PC-3 (cell line): ENCODE measurements at regions of chr22 and their contacts with region 1.

Region 1: GRCh38 chr22:28429711-28430110 is 249.9 kb downstream of the TTC28 start:
- DNase-seq: no peak
- ATAC-seq: no peak
- H3K4me3 ChIP-seq: no peak overlapping the region
- H3K27ac ChIP-seq: no peak overlapping the region
- H3K4me1 ChIP-seq: peaks cover 10% of the 10 kb centered on the region
- H3K27me3 ChIP-seq: no peaks in the 10 kb centered on the region
- CTCF ChIP-seq: no peak

Region 2: DNA sequence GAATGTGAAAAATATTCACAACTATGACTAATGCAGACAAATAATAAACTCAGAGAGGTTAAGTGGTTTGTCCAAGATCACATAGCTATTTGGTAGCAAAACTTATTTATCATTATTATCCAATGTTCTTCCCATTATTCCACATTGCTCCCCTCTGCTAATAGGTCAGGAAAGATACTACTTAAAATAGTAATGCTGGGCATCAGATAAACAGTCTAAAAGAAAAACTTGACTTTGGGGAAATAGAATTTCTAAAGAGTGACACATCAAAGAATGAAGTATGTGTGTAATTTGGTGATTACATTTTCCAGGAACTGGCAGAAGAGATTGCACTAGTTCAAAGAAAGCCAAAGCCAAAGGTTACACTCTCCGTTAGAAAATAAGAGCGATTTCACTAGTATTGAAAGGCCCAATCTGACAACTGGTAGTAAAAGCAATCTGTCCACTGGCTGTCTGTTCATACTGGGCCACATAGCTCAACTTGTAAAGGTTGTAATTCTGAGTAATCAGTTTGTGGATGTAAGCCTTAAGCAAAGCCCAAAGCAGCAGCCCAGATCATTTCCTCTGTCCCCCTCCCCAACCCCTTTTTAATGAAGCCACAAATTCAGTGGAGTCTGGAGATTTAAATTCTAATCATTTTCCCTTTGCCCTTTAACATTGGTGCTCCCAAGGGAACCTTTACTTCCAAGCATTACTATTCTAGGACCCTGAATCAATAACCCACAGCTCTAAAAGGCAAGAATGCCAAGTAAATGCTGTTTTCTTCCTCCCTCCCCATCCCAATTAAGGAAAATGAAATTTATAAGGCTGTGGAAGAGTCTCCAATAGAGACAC is 33.6 kb before region 1 on chr22:
- CTCF ChIA-PET with region 1: no interaction called
- POLR2A ChIA-PET with region 1: no interaction called
- intact Hi-C with region 1: loop called (anchors 1 kb)
- DNase-seq: peak; percentile 4
- ATAC-seq: peak; percentile 61
- H3K4me3 ChIP-seq: no peak overlapping the region
- H3K27ac ChIP-seq: no peak overlapping the region
- H3K4me1 ChIP-seq: 0 out of 2 replicates have a peak, but pooled peaks cover 4% of the 10 kb centered on the region
- H3K27me3 ChIP-seq: no peaks in the 10 kb centered on the region
- CTCF ChIP-seq: no peak

Region 3: GRCh38 chr22:28442264-28442710 is 12.6 kb after region 1 on chr22:
- CTCF ChIA-PET with region 1: no interaction called
- POLR2A ChIA-PET with region 1: no interaction called
- intact Hi-C with region 1: no loop called
- DNase-seq: no peak
- ATAC-seq: no peak
- H3K4me3 ChIP-seq: no peak overlapping the region
- H3K27ac ChIP-seq: no peak overlapping the region
- H3K4me1 ChIP-seq: no peaks in the 10 kb centered on the region
- H3K27me3 ChIP-seq: no peaks in the 10 kb centered on the region
- CTCF ChIP-seq: no peak

Region 4: DNA sequence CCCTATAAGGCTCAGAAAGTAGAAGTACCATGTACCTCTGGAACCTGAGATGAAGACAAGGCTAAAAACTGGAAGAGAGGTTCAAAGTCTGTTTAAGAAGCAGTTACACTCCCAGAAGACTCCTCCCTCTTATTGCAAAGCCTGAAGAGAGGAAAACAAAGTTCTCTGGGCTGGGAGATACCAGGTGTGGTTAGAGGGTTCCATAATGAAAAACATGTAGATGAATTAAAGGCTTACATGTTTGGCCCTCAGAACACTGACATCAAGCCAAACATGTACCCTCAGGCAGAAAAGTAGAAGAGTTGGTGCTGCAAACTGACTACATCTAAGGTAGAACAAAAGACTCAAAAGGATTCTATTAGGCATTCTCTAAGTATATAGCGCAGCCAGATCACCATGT is 44.6 kb after region 1 on chr22:
- CTCF ChIA-PET with region 1: no interaction called
- POLR2A ChIA-PET with region 1: no interaction called
- intact Hi-C with region 1: no loop called
- DNase-seq: no peak
- ATAC-seq: no peak
- H3K4me3 ChIP-seq: no peak overlapping the region
- H3K27ac ChIP-seq: no peak overlapping the region
- H3K4me1 ChIP-seq: no peaks in the 10 kb centered on the region
- H3K27me3 ChIP-seq: no peaks in the 10 kb centered on the region
- CTCF ChIP-seq: no peak

Region 5: GRCh38 chr22:28484662-28485061 is 55.0 kb after region 1 on chr22:
- CTCF ChIA-PET with region 1: no interaction called
- POLR2A ChIA-PET with region 1: interaction called, 17 read pairs
- intact Hi-C with region 1: no loop called
- DNase-seq: no peak
- ATAC-seq: no peak
- H3K4me3 ChIP-seq: no peak overlapping the region
- H3K27ac ChIP-seq: no peak overlapping the region
- H3K4me1 ChIP-seq: no peaks in the 10 kb centered on the region
- H3K27me3 ChIP-seq: no peaks in the 10 kb centered on the region
- CTCF ChIP-seq: no peak